Caco-2 (cell line): ENCODE measurements at regions of chr14 and their contacts with region 1.

Region 1: DNA sequence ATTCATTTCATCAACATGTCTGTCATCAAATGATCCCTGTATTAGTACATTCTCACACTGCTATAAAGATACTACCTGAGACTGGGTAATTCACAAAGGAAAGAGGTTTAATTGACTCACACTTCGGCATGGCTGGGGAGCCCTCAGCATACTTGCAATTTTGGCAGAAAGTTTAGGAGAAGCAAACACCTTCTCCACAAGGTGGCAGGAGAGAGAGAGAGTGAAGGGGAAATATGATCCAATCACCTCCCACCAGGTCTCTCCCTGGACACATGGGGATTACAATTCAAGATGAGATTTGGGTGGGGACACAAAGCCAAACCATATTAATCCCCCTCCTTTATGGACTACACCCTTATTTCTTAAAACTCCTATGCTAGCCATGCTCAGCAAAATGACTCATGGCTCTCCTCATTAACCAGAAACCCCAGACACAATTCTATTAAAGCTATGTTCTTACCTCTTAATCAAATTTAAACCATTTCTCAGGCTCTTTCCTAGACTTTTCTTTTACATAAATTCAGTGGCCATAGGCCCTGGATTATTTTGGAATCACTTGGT is 932.3 kb downstream of the FLRT2 start:
- DNase-seq: peak; percentile 32 to 53
- H3K4me3 ChIP-seq: no peak overlapping the region
- H3K4me3 Mint-ChIP-seq: no peak overlapping the region
- H3K27ac Mint-ChIP-seq: no peak overlapping the region
- H3K4me1 ChIP-seq: no peaks in the 10 kb centered on the region
- H3K4me1 Mint-ChIP-seq: no peaks in the 10 kb centered on the region
- H3K27me3 ChIP-seq: no peaks in the 10 kb centered on the region
- H3K27me3 Mint-ChIP-seq: peaks cover 6% of the 10 kb centered on the region
- CTCF ChIP-seq: peak; percentile 52 to 53

Region 2: DNA sequence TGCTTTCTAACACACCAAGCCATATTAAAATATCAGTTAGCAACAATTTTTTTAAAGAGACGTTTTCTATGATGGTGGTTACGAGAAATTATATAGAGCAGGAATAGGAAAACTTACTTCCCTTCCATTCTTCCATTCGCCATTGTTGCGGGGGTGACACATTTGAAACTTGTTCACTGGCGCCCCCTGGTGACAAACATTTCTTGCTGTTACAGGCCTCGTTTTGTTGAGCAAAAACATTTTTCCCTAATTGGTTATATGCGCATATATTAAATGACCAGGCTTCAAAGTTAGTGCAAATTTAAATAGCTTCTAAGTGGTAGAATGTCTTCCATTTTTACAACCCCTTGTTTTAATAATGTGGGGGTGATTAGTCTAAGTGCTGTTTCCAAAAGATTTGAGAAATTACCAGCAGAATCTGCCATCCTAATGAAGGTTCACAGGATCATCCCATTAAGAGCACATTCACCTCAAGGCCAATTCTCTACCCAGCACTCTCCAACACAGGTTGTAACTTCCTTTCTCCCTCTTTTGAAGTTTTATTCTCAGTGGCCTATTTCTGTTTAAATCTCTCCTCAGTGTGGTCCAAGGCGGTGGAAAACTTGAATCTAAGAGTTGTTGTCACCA is 192.4 kb after region 1 on chr14:
- CTCF ChIA-PET with region 1: no interaction called
- POLR2A ChIA-PET with region 1: no interaction called
- intact Hi-C with region 1: loop called (anchors 1 kb)
- DNase-seq: peak; percentile 49 to 66
- H3K4me3 ChIP-seq: no peak overlapping the region
- H3K4me3 Mint-ChIP-seq: no peak overlapping the region
- H3K27ac Mint-ChIP-seq: no peak overlapping the region
- H3K4me1 ChIP-seq: no peaks in the 10 kb centered on the region
- H3K4me1 Mint-ChIP-seq: no peaks in the 10 kb centered on the region
- H3K27me3 ChIP-seq: no peaks in the 10 kb centered on the region
- H3K27me3 Mint-ChIP-seq: peaks cover 3% of the 10 kb centered on the region
- CTCF ChIP-seq: peak; percentile 27 to 70

Region 3: DNA sequence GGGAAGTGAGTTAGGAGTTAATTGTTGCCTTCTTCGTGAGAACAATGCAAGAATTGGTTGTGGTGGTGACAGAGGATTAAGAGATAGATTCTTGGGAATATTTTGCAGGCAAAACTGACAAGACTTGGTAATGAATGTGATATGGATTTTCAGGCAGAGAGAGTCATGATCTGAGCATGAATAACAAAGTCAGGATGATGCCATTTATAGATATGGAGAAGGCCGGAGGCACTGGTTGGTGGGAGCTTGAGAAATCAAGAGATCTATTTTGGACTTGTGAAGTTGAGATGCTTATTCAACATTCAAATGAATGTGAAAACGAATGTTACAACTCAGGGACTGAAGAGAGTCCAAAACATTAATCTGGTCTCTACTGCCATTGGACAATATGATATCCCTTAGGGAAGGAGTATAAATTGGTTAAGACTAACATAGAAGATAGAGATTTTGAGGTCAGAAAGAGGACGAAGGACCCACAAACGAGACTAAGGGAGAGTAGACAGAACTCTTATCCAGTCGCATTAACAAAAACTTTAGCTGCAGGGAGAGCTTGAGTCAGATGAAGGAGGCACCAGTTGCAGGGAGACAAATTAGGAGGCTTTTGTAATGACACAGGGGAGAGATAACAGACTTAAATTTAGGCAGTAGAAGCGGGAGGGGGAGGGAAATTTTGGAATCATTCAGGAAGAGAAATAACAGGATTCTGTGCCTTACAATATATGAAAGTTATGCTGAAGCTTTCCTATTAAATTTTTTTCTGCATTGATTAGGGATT is 440.1 kb after region 1 on chr14:
- CTCF ChIA-PET with region 1: no interaction called
- POLR2A ChIA-PET with region 1: no interaction called
- intact Hi-C with region 1: loop called (anchors 1 kb)
- DNase-seq: no peak
- H3K4me3 ChIP-seq: no peak overlapping the region
- H3K4me3 Mint-ChIP-seq: no peak overlapping the region
- H3K27ac Mint-ChIP-seq: no peak overlapping the region
- H3K4me1 ChIP-seq: no peaks in the 10 kb centered on the region
- H3K4me1 Mint-ChIP-seq: no peaks in the 10 kb centered on the region
- H3K27me3 ChIP-seq: no peaks in the 10 kb centered on the region
- H3K27me3 Mint-ChIP-seq: no peaks in the 10 kb centered on the region
- CTCF ChIP-seq: no peak

Region 4: DNA sequence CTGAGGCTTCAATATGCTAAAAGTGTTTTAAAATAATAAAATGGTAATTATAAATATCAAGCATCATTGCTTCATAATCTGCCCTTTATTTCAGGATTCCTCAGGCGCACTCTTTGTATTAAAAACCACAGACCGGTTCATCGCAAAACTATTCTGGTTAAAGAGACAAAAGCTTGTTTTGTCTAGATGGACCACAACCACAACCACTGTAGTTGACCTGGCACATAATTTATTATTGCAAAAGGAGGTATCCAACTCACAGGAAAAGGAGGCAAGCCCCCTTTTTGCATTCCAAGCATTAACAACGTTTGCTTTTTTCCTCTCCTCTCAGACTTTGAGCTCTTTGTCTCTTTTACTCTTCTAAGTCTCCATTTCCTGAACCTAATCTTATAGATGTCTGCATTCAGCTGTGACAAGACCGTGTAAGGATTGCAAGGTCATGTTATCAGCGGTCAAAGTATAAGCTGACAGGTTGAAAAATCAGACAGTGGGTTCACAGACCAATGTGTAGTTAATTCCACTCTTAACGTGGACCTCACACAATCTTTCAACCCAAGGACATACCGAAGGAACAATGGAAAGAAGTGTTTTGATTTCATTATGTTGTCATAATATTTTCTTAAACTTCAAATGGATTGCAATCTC is 473.1 kb after region 1 on chr14:
- CTCF ChIA-PET with region 1: no interaction called
- POLR2A ChIA-PET with region 1: no interaction called
- intact Hi-C with region 1: no loop called
- DNase-seq: no peak
- H3K4me3 ChIP-seq: no peak overlapping the region
- H3K4me3 Mint-ChIP-seq: no peak overlapping the region
- H3K27ac Mint-ChIP-seq: no peak overlapping the region
- H3K4me1 ChIP-seq: no peaks in the 10 kb centered on the region
- H3K4me1 Mint-ChIP-seq: no peaks in the 10 kb centered on the region
- H3K27me3 ChIP-seq: no peaks in the 10 kb centered on the region
- H3K27me3 Mint-ChIP-seq: peaks cover 5% of the 10 kb centered on the region
- CTCF ChIP-seq: no peak

Region 5: DNA sequence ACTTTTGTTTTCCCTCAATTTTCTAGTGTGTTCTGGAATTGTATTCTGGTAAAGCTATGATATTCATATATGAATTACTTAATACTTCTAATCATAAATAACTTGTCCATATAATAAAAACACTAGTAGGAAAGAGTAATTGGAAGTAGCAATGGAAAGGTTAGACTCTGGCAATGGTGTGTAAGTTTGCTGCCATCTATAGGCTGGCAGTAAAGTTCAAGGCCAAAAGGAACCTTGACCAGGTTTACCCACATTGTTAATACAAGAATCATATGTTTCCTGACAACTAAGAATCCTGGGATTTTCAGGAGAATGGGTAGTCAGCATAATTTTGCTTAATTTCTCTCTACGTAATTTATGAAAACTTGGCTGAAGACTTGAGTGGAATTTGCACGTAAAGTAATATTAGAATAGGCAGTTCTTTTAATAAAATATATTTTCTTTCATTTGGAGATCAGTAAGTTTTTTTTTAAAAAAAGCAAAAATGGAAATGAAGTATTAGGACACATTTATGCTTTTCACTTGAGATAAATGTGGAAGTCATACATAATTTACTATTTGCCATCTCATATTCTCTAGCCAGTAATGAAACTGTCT is 604.0 kb after region 1 on chr14:
- CTCF ChIA-PET with region 1: no interaction called
- POLR2A ChIA-PET with region 1: no interaction called
- intact Hi-C with region 1: loop called (anchors 1 kb)
- DNase-seq: peak in 1 of 2 experiments; percentile 5
- H3K4me3 ChIP-seq: no peak overlapping the region
- H3K4me3 Mint-ChIP-seq: no peak overlapping the region
- H3K27ac Mint-ChIP-seq: no peak overlapping the region
- H3K4me1 ChIP-seq: no peaks in the 10 kb centered on the region
- H3K4me1 Mint-ChIP-seq: no peaks in the 10 kb centered on the region
- H3K27me3 ChIP-seq: no peaks in the 10 kb centered on the region
- H3K27me3 Mint-ChIP-seq: peaks cover 1% of the 10 kb centered on the region
- CTCF ChIP-seq: peak; percentile 29 to 52